SK-N-SH (cell line): ENCODE measurements at regions of chr16 and their contacts with region 1.

Region 1: GRCh38 chr16:69123910-69124309 is 8.5 kb downstream of the CHTF8 start:
- DNase-seq: peak; percentile 65
- H3K4me3 ChIP-seq: no peak overlapping the region
- H3K27ac ChIP-seq: no peak overlapping the region
- H3K4me1 ChIP-seq: no peaks in the 10 kb centered on the region
- H3K27me3 ChIP-seq: no peaks in the 10 kb centered on the region
- CTCF ChIP-seq: peak; percentile 82
- EP300 ChIP-seq: no peak
- RAD21 ChIP-seq: peak; percentile 89

Region 2: GRCh38 chr16:68528686-68529379 is 595.1 kb before region 1 on chr16:
- CTCF ChIA-PET with region 1: interaction called, 17 read pairs
- POLR2A ChIA-PET with region 1: no interaction called
- DNase-seq: peak; percentile 89
- H3K4me3 ChIP-seq: peak overlapping the region; percentile 27 to 78; a peak in 3 of 4 replicates
- H3K27ac ChIP-seq: no peak overlapping the region
- H3K4me1 ChIP-seq: peaks cover 10 to 14% of the 10 kb centered on the region in 2 experiments; a peak in 2 of 4 replicates
- H3K27me3 ChIP-seq: no peaks in the 10 kb centered on the region
- CTCF ChIP-seq: peak; percentile 80
- EP300 ChIP-seq: no peak
- RAD21 ChIP-seq: peak; percentile 94

Region 3: DNA sequence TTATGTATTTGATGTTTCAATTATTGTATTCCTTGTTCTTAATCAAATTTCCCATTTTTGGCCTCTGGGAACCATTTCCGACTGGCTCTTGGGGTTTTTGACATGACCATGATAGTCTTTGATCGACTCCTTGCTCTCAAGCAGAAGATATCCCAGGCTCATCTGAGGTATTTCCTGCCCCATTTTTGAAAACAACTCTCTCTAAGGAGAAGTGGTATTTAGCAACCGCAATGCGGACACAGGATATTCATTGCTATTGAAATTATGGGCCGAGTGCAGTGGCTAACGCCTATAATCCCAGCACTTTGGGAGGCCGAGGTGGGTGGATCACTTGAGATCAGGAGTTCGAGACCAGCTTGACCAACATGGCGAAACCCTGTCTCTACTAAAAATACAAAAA is 275.1 kb before region 1 on chr16:
- CTCF ChIA-PET with region 1: interaction called, 73 read pairs
- POLR2A ChIA-PET with region 1: interaction called, 3 read pairs
- DNase-seq: no peak
- H3K4me3 ChIP-seq: no peak overlapping the region
- H3K27ac ChIP-seq: no peak overlapping the region
- H3K4me1 ChIP-seq: peaks cover 0 to 3% of the 10 kb centered on the region in 2 experiments; a peak in 3 of 4 replicates
- H3K27me3 ChIP-seq: no peaks in the 10 kb centered on the region
- CTCF ChIP-seq: no peak
- EP300 ChIP-seq: no peak
- RAD21 ChIP-seq: no peak

Region 4: DNA sequence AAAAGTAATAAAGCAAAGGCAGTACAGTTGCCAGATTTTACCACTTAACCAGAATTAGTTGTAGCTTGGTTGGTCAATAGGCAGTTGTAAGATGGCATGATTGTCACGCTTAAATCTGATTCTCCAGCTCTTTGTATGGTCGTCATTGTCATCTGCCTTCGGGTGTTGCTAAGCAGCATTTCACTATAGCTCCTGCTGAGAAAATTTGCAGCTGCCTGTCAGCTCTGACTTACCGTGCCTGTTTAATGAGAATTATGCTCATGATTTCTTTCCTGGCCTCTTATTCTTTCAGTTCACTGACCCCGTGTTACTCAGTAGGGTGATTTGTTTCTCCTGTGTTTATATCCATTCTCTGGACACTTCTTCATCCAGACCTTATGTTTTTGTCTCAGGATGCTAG is 213.9 kb before region 1 on chr16:
- CTCF ChIA-PET with region 1: interaction called, 12 read pairs
- POLR2A ChIA-PET with region 1: no interaction called
- DNase-seq: no peak
- H3K4me3 ChIP-seq: no peak overlapping the region
- H3K27ac ChIP-seq: no peak overlapping the region
- H3K4me1 ChIP-seq: no peaks in the 10 kb centered on the region
- H3K27me3 ChIP-seq: no peaks in the 10 kb centered on the region
- CTCF ChIP-seq: no peak
- EP300 ChIP-seq: no peak
- RAD21 ChIP-seq: no peak

Region 5: DNA sequence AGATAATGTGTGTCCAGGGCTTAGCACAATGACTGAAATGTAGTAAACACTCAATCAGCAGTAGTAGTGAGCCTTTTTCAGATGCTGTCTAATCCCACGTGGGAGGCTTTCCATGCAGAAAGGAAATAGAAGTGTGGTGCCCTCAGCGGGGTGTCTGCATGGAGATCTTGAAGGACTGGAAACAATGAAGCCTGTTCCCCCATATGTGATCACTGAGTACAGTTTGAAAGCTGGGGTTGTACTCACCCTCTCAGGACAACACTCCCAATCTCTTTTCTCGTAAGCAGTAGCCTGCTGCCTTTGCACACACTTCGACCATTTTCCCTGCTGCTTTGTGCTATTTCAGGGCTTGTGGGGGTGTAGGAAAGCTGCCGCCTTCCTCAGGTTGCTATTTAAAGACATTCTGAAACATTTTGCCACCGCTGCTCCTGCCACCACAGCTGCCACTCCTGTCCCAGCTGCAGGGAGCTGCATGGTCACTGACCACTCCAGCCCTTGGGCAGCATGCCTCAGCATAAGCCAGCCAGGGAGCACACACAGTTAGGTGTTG is 59.1 kb before region 1 on chr16:
- CTCF ChIA-PET with region 1: no interaction called
- POLR2A ChIA-PET with region 1: no interaction called
- DNase-seq: no peak
- H3K4me3 ChIP-seq: no peak overlapping the region
- H3K27ac ChIP-seq: no peak overlapping the region
- H3K4me1 ChIP-seq: peaks cover 0 to 17% of the 10 kb centered on the region in 2 experiments; a peak in 1 of 4 replicates
- H3K27me3 ChIP-seq: no peaks in the 10 kb centered on the region
- CTCF ChIP-seq: no peak
- EP300 ChIP-seq: no peak
- RAD21 ChIP-seq: no peak

Region 6: DNA sequence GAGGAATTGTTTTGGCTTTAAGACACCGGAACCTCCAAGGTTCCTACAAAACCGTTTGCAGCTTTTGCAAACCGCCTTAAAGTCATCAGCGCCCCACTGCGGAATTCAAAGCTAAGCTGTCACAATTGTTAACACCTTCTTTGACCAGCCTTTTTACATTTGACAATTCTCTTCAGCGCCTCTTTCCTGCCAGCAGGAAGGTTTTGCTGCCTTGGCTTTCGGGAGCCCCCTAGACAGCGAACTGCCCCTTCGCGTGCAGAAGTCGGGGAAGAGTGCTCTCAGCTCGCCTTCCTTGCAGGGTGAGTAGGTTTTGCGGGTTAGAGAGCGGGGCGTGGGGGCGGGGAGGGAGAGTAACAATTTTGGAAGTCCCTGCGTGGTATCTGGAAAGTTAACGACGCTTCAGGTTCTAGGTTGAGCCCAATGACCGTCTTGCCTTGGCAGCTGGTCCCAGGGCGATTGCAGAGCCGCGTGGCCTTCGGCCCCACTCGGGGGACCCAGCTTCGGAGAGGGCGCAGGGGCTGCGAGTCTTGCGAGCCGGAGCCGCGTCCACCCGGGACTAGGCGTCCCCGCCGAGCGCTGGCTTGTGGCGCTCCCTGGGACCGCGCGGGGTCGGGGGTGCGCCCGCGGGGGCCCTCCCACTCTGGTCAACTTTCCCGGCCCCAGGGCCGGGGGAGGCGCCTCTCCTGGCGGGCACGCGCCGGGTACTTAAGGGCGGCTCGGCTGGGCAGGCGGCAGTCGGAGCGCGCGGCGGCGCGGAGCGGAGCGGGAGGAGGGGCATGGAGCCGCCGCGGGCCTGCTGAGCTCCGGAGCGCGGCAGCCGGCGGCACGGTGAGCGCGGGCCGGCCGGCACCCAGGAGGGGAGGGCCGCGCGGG is 18.2 kb before region 1 on chr16 and contains the start of gene HAS3:
- CTCF ChIA-PET with region 1: interaction called, 62 read pairs
- POLR2A ChIA-PET with region 1: no interaction called
- DNase-seq: peak; percentile 90
- H3K4me3 ChIP-seq: peak within 1 kb of the TSS; percentile 67 to 76
- H3K27ac ChIP-seq: no peak within 1 kb of the TSS
- H3K4me1 ChIP-seq: peaks cover 8 to 18% of the 10 kb centered on the region in 2 experiments; a peak in 3 of 4 replicates
- H3K27me3 ChIP-seq: no peaks in the 10 kb centered on the region
- CTCF ChIP-seq: no peak
- EP300 ChIP-seq: no peak
- RAD21 ChIP-seq: peak; percentile 62
- polyA plus RNA-seq, gene HAS3: 38.7 and 52.4 TPM in 2 replicates

Region 7: GRCh38 chr16:69632836-69633235 is 508.9 kb after region 1 on chr16:
- CTCF ChIA-PET with region 1: no interaction called
- POLR2A ChIA-PET with region 1: no interaction called
- DNase-seq: no peak
- H3K4me3 ChIP-seq: no peak overlapping the region
- H3K27ac ChIP-seq: no peak overlapping the region
- H3K4me1 ChIP-seq: no peaks in the 10 kb centered on the region; a peak in 1 of 4 replicates
- H3K27me3 ChIP-seq: no peaks in the 10 kb centered on the region
- CTCF ChIP-seq: no peak
- EP300 ChIP-seq: no peak
- RAD21 ChIP-seq: no peak